PC-9 (cell line): ENCODE measurements at regions of chr19 and their contacts with region 1.

Region 1: GRCh38 chr19:2475702-2476450 is at the start of gene GADD45B:
- DNase-seq: peak; percentile 82 to 94
- H3K4me3 ChIP-seq: peak within 1 kb of the TSS; percentile 77
- H3K27ac ChIP-seq: peak within 1 kb of the TSS; percentile 92
- H3K4me1 ChIP-seq: peaks cover 11% of the 10 kb centered on the region
- H3K27me3 ChIP-seq: no peaks in the 10 kb centered on the region
- CTCF ChIP-seq: no peak
- total RNA-seq, gene GADD45B: 24.7 and 35.5 TPM in 2 replicates

Region 2: DNA sequence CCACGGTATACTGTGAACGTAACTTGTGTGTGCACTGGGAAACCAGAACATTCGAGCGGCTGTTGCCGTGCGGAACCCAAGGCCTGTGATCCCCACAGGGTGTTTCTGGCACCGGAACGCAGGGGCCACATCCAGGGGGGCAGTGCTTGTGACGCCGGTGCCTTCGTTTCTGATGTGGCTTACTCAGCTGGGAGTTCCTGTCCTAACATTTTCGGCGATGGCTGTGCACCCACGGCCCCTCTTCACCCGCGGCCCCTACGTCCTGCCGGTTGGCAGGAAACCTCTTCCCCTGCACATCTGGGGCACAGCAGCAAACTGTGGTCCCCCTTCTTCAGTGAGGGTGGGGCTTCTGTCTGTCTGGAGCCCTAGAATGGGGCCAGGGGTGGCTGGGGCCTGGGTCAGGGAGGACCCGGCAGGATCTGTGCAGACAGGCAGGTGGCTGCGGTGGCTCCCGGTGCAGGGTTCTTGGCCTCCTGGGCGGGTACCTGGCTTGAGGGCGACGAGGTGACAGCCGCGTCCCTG is 508.7 kb before region 1 on chr19:
- CTCF ChIA-PET with region 1: no interaction called
- POLR2A ChIA-PET with region 1: no interaction called
- intact Hi-C with region 1: no loop called
- DNase-seq: no peak
- H3K4me3 ChIP-seq: no peak overlapping the region
- H3K27ac ChIP-seq: no peak overlapping the region
- H3K4me1 ChIP-seq: no peaks in the 10 kb centered on the region
- H3K27me3 ChIP-seq: no peaks in the 10 kb centered on the region
- CTCF ChIP-seq: no peak

Region 3: GRCh38 chr19:2494444-2495129 is 18.7 kb after region 1 on chr19:
- CTCF ChIA-PET with region 1: interaction called, 4 read pairs
- POLR2A ChIA-PET with region 1: interaction called, 6 read pairs
- intact Hi-C with region 1: loop called (anchors 2 kb)
- DNase-seq: peak; percentile 32 to 50
- H3K4me3 ChIP-seq: peak overlapping the region; percentile 62
- H3K27ac ChIP-seq: peak overlapping the region; percentile 75
- H3K4me1 ChIP-seq: peaks cover 37% of the 10 kb centered on the region
- H3K27me3 ChIP-seq: no peaks in the 10 kb centered on the region
- CTCF ChIP-seq: no peak

Region 4: DNA sequence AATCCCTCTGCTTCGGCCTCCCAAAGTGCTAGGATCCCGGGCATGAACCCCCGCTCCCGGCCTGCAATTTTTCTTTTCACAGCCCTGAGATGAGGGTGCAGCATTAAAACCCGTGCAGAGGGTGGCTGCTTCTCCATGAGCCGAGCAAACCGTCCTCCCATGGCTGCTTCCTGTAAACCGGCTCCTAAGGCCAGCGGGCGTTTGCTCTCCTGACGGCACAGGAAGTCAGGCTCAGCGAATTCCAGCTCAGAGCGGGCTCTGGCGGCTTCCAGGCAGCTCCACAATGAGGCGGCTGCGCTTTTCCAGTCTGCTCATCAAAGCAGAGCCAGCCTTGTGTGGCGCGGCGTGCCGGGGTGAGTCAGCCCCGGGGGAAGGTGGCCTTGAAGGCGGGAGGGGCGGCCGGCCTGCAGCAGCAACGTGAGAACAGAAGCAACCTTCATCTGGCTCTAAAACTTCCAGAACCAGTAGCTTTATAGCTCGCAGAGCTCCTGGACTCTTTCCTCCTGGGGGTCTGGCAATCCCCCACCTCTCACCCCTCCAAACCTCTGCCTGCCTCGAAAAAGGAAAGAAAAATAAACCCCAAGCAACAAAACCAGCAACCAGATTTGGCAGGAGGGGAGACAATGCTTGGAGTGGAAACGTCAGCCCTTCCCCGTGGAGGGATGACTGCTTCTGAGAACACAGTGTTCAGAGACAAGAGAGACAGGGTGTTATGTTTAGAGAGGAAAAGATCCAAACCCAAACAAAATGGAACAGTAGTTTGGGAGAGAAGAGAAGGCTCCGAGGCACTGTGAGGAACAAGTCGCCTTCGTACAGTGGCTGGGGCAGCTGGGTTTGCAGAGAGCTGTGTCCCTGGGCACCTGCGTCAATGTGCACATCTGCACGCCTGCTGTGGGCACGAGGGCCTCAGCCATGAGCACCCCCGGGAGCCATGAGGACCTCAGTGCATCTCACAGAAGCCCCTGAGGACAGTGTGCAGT is 67.9 kb after region 1 on chr19:
- CTCF ChIA-PET with region 1: no interaction called
- POLR2A ChIA-PET with region 1: interaction called, 33 read pairs
- intact Hi-C with region 1: loop called (anchors 1 kb)
- DNase-seq: peak; percentile 91
- H3K4me3 ChIP-seq: peak overlapping the region; percentile 42; the same call in 1 of the 2 replicates
- H3K27ac ChIP-seq: peak overlapping the region; percentile 98
- H3K4me1 ChIP-seq: peaks cover 47% of the 10 kb centered on the region
- H3K27me3 ChIP-seq: no peaks in the 10 kb centered on the region
- CTCF ChIP-seq: no peak

Region 5: DNA sequence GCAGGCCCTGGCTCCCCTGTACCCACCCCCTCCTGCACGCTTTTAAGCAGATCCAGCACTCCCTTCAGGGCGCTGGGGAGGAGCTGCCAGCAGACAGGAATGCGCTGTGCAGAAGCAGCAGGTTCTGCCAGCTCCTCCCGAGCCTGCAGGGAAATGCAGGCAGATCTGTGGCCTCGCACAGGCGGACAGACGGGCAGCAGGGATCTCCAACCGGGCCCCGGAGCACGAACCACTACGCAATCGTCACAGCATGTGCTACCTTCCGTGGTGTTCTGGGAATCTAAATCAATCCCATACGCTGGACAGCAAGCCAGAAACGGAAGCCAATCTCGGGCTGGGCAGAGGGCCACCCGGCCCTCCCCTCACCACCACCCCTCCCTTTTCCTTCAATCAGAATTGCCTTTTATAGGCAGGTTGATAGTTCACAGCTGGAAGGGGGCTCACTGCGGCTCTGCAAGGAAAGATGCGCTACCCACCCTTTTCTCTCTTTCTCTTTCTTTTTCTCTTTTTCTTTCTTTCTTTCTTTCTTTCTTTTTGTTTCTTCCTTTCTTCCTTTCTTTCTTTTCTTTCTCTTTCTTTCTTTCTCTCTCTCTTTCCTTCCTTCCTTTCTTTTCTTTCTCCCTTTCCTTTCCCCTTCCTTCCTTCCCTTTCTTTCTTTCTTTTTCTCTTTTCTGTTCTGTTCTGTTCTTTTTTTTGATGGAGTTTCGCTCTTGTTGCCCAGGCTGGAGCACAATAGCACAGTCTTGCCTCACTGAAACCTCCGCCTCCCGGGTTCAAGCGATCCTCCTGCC is 126.7 kb after region 1 on chr19:
- CTCF ChIA-PET with region 1: no interaction called
- POLR2A ChIA-PET with region 1: interaction called, 14 read pairs
- intact Hi-C with region 1: no loop called
- DNase-seq: peak; percentile 56 to 59
- H3K4me3 ChIP-seq: peak overlapping the region; percentile 26; the same call in 1 of the 2 replicates
- H3K27ac ChIP-seq: no peak overlapping the region
- H3K4me1 ChIP-seq: no peaks in the 10 kb centered on the region
- H3K27me3 ChIP-seq: no peaks in the 10 kb centered on the region
- CTCF ChIP-seq: no peak

Region 6: DNA sequence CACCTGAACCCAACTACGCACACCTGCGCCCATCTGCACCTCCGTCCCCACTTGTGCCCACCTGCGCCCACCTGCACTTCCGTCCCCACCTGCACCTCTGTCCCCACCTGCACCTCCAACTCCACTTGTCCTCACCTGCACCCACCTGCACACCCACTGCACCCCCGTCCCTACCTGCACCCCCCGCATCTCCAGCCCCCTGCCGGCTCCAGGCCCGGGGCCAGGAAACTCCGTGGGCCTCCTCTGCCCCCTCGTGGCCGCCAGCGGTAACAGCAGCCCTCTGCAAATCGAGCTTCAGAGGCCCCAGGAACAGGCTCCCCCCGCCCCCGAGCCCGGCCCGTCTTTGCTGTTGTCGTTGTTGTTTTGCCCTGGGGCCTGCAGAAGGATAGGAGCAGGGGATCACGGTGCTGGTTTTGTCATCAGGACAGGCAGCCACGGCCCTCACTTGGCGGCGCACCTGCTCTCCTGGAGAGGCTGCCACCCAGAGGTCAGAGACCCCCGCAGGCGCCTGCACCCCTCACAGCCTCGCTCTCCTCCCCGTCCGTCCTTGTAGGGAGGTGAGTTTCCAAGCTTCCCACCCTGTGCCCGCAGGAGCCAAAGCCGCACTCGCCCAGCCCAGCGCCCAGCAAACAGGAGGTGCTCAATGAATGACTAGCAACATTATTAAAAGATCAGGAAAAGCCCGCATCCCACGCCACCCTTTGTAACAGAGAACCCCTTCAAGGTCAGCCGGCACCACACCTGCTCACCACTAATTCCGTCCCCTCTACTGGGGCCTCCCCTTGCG is 161.2 kb after region 1 on chr19:
- CTCF ChIA-PET with region 1: interaction called, 5 read pairs
- POLR2A ChIA-PET with region 1: interaction called, 4 read pairs
- intact Hi-C with region 1: loop called (anchors 1 kb)
- DNase-seq: peak in 1 of 2 experiments; percentile 54
- H3K4me3 ChIP-seq: no peak overlapping the region
- H3K27ac ChIP-seq: no peak overlapping the region
- H3K4me1 ChIP-seq: no peaks in the 10 kb centered on the region
- H3K27me3 ChIP-seq: peaks cover 21% of the 10 kb centered on the region
- CTCF ChIP-seq: peak; percentile 84

Region 7: DNA sequence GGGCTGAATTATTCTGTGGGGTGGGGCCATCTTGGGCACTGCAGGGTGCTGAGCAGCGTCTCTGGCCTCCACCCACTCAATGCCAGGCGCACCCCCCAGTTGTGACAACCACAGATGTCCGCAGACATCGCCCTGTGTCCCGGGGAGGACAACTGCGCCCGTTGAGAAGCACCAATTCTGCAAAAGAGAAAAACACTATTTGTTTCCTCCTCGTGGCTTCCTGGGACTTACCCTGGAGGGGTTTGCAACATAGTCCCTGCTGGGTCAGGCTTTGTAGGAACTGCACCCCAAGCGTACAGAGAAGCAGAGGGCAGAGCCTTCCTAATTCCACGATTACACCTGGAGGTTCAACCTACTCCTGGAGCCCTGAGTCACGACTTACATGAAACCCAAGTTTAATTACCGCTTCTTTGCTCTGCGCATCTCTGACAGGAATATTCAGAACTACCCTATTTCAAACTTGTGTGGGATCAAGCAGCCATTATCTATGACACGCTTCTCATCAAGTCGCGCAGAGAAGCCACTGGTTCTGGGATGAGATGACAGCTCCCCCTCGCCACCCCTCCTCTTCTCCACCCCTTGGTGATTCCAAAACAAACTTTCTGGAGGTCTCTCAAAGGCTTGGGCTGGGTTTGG is 275.1 kb after region 1 on chr19:
- CTCF ChIA-PET with region 1: no interaction called
- POLR2A ChIA-PET with region 1: no interaction called
- intact Hi-C with region 1: no loop called
- DNase-seq: no peak
- H3K4me3 ChIP-seq: no peak overlapping the region
- H3K27ac ChIP-seq: no peak overlapping the region
- H3K4me1 ChIP-seq: no peaks in the 10 kb centered on the region
- H3K27me3 ChIP-seq: peaks cover 6% of the 10 kb centered on the region
- CTCF ChIP-seq: no peak